GM12878 (cell line): ENCODE measurements at regions of chr9 and their contacts with region 1.

Region 1: GRCh38 chr9:17793713-17794622 is 215.1 kb downstream of the SH3GL2 start:
- DNase-seq: no peak
- ATAC-seq: peak; percentile 78
- H3K4me3 ChIP-seq: no peak overlapping the region
- H3K27ac ChIP-seq: no peak overlapping the region
- H3K4me1 ChIP-seq: no peaks in the 10 kb centered on the region
- H3K27me3 ChIP-seq: no peaks in the 10 kb centered on the region
- CTCF ChIP-seq: peak; percentile 10 to 30 (median 14); a peak in 2 of 6 replicates
- EP300 ChIP-seq: no peak
- POLR2A ChIP-seq: no peak
- RAD21 ChIP-seq: peak; percentile 22; the same call in 1 of the 2 replicates

Region 2: DNA sequence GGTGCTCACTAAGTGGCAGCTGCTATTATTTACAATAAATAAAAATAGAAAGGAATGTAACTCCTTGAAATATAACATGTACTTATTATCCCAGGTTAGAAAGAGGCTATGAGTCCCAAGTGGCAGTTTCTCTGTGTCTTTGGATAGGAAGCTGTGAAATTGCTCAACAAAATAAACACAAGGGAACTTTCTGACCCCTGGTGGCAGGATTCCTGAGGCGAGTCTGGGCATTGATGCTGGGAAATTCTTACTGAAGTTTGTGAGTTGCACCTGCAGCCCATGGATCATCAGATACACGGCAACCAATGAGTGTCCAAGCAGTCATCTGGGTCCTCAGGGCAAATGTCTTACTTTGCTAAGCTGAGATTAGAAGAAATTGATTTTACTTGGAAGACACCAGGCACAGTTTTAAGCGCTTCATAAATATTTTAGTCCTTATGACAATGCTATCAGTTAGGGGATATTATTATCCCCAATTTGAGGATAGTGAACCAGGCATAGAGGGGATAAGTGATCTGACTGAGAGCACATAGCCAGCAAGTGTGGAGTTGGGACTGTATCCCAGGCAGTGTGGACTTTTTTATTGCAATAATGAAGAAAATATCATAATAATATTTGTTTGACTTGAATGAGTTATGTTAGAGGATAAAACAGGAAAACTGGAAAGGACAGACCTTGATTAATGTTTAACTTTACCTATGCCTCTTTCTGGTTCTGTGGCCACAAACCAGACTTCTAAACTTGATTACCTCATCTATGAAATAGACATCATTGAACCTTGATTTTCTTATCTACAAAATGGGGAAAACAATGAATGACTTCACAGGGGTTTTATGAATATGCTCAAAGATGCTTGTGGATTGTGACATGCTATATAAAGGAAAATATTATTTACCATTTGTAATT is 414.4 kb after region 1 on chr9:
- CTCF ChIA-PET with region 1: interaction called, 3 read pairs
- POLR2A ChIA-PET with region 1: no interaction called
- RAD21 ChIA-PET with region 1: interaction called, 4 read pairs
- SMC1A ChIA-PET with region 1: interaction called, 4 read pairs
- in situ Hi-C with region 1: no loop called
- intact Hi-C with region 1: loop called (anchors 1 kb)
- DNase-seq: no peak
- ATAC-seq: no peak
- H3K4me3 ChIP-seq: no peak overlapping the region
- H3K27ac ChIP-seq: no peak overlapping the region
- H3K4me1 ChIP-seq: no peaks in the 10 kb centered on the region
- H3K27me3 ChIP-seq: no peaks in the 10 kb centered on the region
- CTCF ChIP-seq: peak; percentile 12 to 42 (median 36); a peak in 3 of 6 replicates
- EP300 ChIP-seq: no peak
- POLR2A ChIP-seq: no peak
- RAD21 ChIP-seq: peak; percentile 31; the same call in 1 of the 2 replicates